Naive thymus-derived CD8-positive, alpha-beta T cell (primary cell): ENCODE measurements at regions of chr9 and their contacts with region 1.

Region 1: GRCh38 chr9:122827761-122828093 is 661 bp downstream of the PDCL start:
- DNase-seq: no peak
- ATAC-seq: peak; percentile 6 to 16
- H3K4me3 Mint-ChIP-seq: peak overlapping the region; percentile 94 to 99 (median 98)
- H3K27ac Mint-ChIP-seq: peak overlapping the region; percentile 91 to 98 (median 97)
- H3K4me1 Mint-ChIP-seq: peaks cover 16 to 46% (median 42%) of the 10 kb centered on the region in 4 donors
- H3K27me3 Mint-ChIP-seq: no peaks in the 10 kb centered on the region

Region 2: GRCh38 chr9:122931226-122932121 is 103.7 kb after region 1 on chr9 and contains the start of gene ZBTB26:
- POLR2A ChIA-PET with region 1: interaction called, 12 read pairs
- DNase-seq: peak; percentile 78 to 93 (median 86)
- ATAC-seq: peak; percentile 97 to 98
- H3K4me3 Mint-ChIP-seq: peak within 1 kb of the TSS in 1 of 10 donors; percentile 97
- H3K27ac Mint-ChIP-seq: peak within 1 kb of the TSS in 6 of 10 donors; percentile 95 to 98 (median 96)
- H3K4me1 Mint-ChIP-seq: peaks cover 10 to 35% (median 19%) of the 10 kb centered on the region in 4 donors
- H3K27me3 Mint-ChIP-seq: no peaks in the 10 kb centered on the region
- polyA plus RNA-seq, gene ZBTB26: 0.57 to 1.3 (median 0.66) TPM